ENCODE measurements at regions of chr7 and their contacts with region 1.

Region 1: DNA sequence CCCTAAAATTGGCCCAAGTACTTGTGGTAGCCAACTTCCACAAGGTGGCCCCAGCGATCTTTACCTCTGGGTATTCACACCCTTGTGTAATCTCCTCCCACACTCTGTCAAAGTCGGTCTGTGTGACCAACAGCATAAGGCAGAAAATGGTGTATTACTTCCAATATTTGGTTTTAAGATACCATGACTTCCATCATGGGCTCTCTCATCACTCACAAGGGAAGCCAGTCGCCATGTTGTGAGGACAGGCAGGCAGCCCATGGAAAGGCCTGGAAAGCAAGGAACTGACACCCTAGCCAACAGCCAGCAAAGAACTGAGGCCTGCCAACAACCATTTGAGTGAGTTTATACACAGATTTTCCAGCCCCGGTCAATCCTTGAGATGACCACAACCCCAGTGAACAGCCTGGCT is 91.0 kb upstream of the KMT2E start:
- DNase-seq: peak; percentile 47
- ATAC-seq: peak; percentile 99
- H3K4me3 Mint-ChIP-seq: no peak overlapping the region
- H3K27ac Mint-ChIP-seq: peak overlapping the region; percentile 46
- H3K4me1 Mint-ChIP-seq: peaks cover 5% of the 10 kb centered on the region
- H3K27me3 Mint-ChIP-seq: no peaks in the 10 kb centered on the region
- CTCF ChIP-seq: peak; percentile 40

Region 2: GRCh38 chr7:104231054-104232046 is 691.7 kb before region 1 on chr7:
- CTCF ChIA-PET with region 1: interaction called, 11 read pairs
- POLR2A ChIA-PET with region 1: no interaction called
- intact Hi-C with region 1: loop called (anchors 1 kb)
- DNase-seq: peak; percentile 18
- ATAC-seq: peak; percentile 62
- H3K4me3 Mint-ChIP-seq: no peak overlapping the region
- H3K27ac Mint-ChIP-seq: no peak overlapping the region
- H3K4me1 Mint-ChIP-seq: peaks cover 2% of the 10 kb centered on the region
- H3K27me3 Mint-ChIP-seq: peaks cover 14% of the 10 kb centered on the region
- CTCF ChIP-seq: peak; percentile 67

Region 3: GRCh38 chr7:104826135-104826534 is 96.9 kb before region 1 on chr7:
- CTCF ChIA-PET with region 1: no interaction called
- POLR2A ChIA-PET with region 1: no interaction called
- intact Hi-C with region 1: no loop called
- DNase-seq: no peak
- ATAC-seq: no peak
- H3K4me3 Mint-ChIP-seq: no peak overlapping the region
- H3K27ac Mint-ChIP-seq: no peak overlapping the region
- H3K4me1 Mint-ChIP-seq: no peaks in the 10 kb centered on the region
- H3K27me3 Mint-ChIP-seq: no peaks in the 10 kb centered on the region
- CTCF ChIP-seq: no peak

Region 4: GRCh38 chr7:104908636-104909035 is 14.4 kb before region 1 on chr7:
- CTCF ChIA-PET with region 1: no interaction called
- POLR2A ChIA-PET with region 1: no interaction called
- intact Hi-C with region 1: no loop called
- DNase-seq: no peak
- ATAC-seq: no peak
- H3K4me3 Mint-ChIP-seq: no peak overlapping the region
- H3K27ac Mint-ChIP-seq: no peak overlapping the region
- H3K4me1 Mint-ChIP-seq: no peaks in the 10 kb centered on the region
- H3K27me3 Mint-ChIP-seq: peaks cover 3% of the 10 kb centered on the region
- CTCF ChIP-seq: no peak

Region 5: GRCh38 chr7:104973909-104974415 is 50.9 kb after region 1 on chr7:
- CTCF ChIA-PET with region 1: interaction called, 92 read pairs
- POLR2A ChIA-PET with region 1: interaction called, 13 read pairs
- intact Hi-C with region 1: no loop called
- DNase-seq: no peak
- ATAC-seq: peak; percentile 68
- H3K4me3 Mint-ChIP-seq: peak overlapping the region; percentile 46
- H3K27ac Mint-ChIP-seq: peak overlapping the region; percentile 83
- H3K4me1 Mint-ChIP-seq: peaks cover 45% of the 10 kb centered on the region
- H3K27me3 Mint-ChIP-seq: no peaks in the 10 kb centered on the region
- CTCF ChIP-seq: no peak

Region 6: GRCh38 chr7:105046414-105046813 is 123.4 kb after region 1 on chr7:
- CTCF ChIA-PET with region 1: interaction called, 9 read pairs
- POLR2A ChIA-PET with region 1: no interaction called
- intact Hi-C with region 1: loop called (anchors 2 kb)
- DNase-seq: no peak
- ATAC-seq: no peak
- H3K4me3 Mint-ChIP-seq: no peak overlapping the region
- H3K27ac Mint-ChIP-seq: no peak overlapping the region
- H3K4me1 Mint-ChIP-seq: peaks cover 34% of the 10 kb centered on the region
- H3K27me3 Mint-ChIP-seq: no peaks in the 10 kb centered on the region
- CTCF ChIP-seq: no peak

Region 7: GRCh38 chr7:105429746-105430612 is 507.0 kb after region 1 on chr7:
- CTCF ChIA-PET with region 1: interaction called, 5 read pairs
- POLR2A ChIA-PET with region 1: no interaction called
- intact Hi-C with region 1: loop called (anchors 5 kb)
- DNase-seq: no peak
- ATAC-seq: peak; percentile 54
- H3K4me3 Mint-ChIP-seq: no peak overlapping the region
- H3K27ac Mint-ChIP-seq: no peak overlapping the region
- H3K4me1 Mint-ChIP-seq: peaks cover 3% of the 10 kb centered on the region
- H3K27me3 Mint-ChIP-seq: no peaks in the 10 kb centered on the region
- CTCF ChIP-seq: no peak

Region 8: GRCh38 chr7:105531792-105532671 is 609.0 kb after region 1 on chr7 and contains the start of gene RINT1:
- CTCF ChIA-PET with region 1: no interaction called
- POLR2A ChIA-PET with region 1: no interaction called
- intact Hi-C with region 1: no loop called
- DNase-seq: peak; percentile 90
- ATAC-seq: peak; percentile 92
- H3K4me3 Mint-ChIP-seq: peak within 1 kb of the TSS; percentile 91
- H3K27ac Mint-ChIP-seq: peak within 1 kb of the TSS; percentile 96
- H3K4me1 Mint-ChIP-seq: peaks cover 33% of the 10 kb centered on the region
- H3K27me3 Mint-ChIP-seq: no peaks in the 10 kb centered on the region
- CTCF ChIP-seq: no peak
- total RNA-seq, gene RINT1: 31.1 and 35.5 TPM in 2 replicates